ENCODE measurements at regions of chr16 and their contacts with region 1.

Region 1: DNA sequence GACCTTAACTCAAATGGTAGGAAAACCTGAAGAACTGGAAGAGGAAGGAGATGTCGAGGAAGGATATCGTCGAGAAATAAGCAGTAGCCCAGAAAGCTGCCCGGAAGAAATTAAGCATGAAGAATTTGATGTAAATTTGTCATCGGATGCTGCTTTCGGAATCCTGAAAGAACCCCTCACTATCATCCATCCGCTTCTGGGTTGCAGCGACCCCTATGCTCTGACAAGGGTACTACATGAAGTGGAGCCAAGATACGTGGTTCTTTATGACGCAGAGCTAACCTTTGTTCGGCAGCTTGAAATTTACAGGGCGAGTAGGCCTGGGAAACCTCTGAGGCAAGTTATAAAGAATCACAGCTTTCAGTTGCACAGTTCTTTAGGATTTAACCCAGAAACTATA is 15.5 kb downstream of the ERCC4 start:
- DNase-seq: no peak
- ATAC-seq: no peak
- H3K4me3 ChIP-seq: no peak overlapping the region
- H3K27ac ChIP-seq: no peak overlapping the region
- H3K4me1 ChIP-seq: peaks cover 0 to 21% (median 9%) of the 10 kb centered on the region in 9 donors
- H3K27me3 ChIP-seq: no peaks in the 10 kb centered on the region
- CTCF ChIP-seq: peak in 8 of 9 donors; percentile 16 to 48 (median 40)

Region 2: DNA sequence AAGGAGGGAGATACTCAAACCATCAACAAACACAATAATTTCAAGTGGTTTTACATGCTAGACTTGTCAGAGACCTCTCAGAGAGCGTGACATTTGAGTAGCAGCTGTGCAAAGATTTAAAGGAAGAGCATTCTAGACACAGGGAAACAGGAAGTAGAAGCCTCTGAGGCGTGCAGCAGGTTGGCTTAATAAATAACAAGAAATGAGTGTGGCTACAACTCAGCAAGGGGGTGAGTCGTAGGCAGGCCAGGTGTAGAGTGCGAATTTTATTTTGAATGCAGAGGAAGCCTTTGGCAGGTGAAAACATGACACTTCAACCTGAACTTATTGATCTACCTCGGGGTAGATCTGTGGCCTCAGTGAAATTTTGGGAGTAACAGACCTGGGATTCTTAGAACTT is 62.5 kb after region 1 on chr16:
- intact Hi-C with region 1: loop called in 3 of 10 experiments (anchors 5 kb)
- DNase-seq: no peak
- ATAC-seq: no peak
- H3K4me3 ChIP-seq: no peak overlapping the region
- H3K27ac ChIP-seq: peak overlapping the region in 6 of 10 donors; percentile 38 to 95 (median 74)
- H3K4me1 ChIP-seq: peaks cover 5 to 79% (median 49%) of the 10 kb centered on the region in 9 donors
- H3K27me3 ChIP-seq: no peaks in the 10 kb centered on the region
- CTCF ChIP-seq: no peak

Region 3: GRCh38 chr16:14003074-14003570 is 67.7 kb after region 1 on chr16:
- intact Hi-C with region 1: loop called in 4 of 10 experiments (anchors 5 kb)
- DNase-seq: peak; percentile 55 to 80
- ATAC-seq: peak; percentile 57 to 86 (median 72)
- H3K4me3 ChIP-seq: peak overlapping the region in 8 of 10 donors; percentile 17 to 48 (median 42)
- H3K27ac ChIP-seq: peak overlapping the region in 9 of 10 donors; percentile 62 to 84 (median 75)
- H3K4me1 ChIP-seq: peaks cover 8 to 73% (median 61%) of the 10 kb centered on the region in 9 donors
- H3K27me3 ChIP-seq: no peaks in the 10 kb centered on the region
- CTCF ChIP-seq: peak in 4 of 9 donors; percentile 21 to 39 (median 31)

Region 4: GRCh38 chr16:14070877-14071575 is 135.6 kb after region 1 on chr16 and contains the start of gene MRTFB:
- intact Hi-C with region 1: loop called in 3 of 10 experiments (anchors 5 to 10 kb)
- DNase-seq: peak; percentile 77 to 87
- ATAC-seq: peak; percentile 80 to 95 (median 92)
- H3K4me3 ChIP-seq: peak within 1 kb of the TSS; percentile 73 to 99 (median 92)
- H3K27ac ChIP-seq: peak within 1 kb of the TSS; percentile 53 to 94 (median 86)
- H3K4me1 ChIP-seq: peaks cover 0 to 37% (median 19%) of the 10 kb centered on the region in 9 donors
- H3K27me3 ChIP-seq: no peaks in the 10 kb centered on the region
- CTCF ChIP-seq: no peak
- total RNA-seq, gene MRTFB: 20.9 to 41.8 (median 33.0) TPM

Region 5: GRCh38 chr16:14219983-14220382 is 284.6 kb after region 1 on chr16:
- intact Hi-C with region 1: loop called in 1 of 10 experiments (anchors 10 kb)
- DNase-seq: no peak
- ATAC-seq: no peak
- H3K4me3 ChIP-seq: no peak overlapping the region
- H3K27ac ChIP-seq: no peak overlapping the region
- H3K4me1 ChIP-seq: no peaks in the 10 kb centered on the region
- H3K27me3 ChIP-seq: no peaks in the 10 kb centered on the region
- CTCF ChIP-seq: no peak

Region 6: DNA sequence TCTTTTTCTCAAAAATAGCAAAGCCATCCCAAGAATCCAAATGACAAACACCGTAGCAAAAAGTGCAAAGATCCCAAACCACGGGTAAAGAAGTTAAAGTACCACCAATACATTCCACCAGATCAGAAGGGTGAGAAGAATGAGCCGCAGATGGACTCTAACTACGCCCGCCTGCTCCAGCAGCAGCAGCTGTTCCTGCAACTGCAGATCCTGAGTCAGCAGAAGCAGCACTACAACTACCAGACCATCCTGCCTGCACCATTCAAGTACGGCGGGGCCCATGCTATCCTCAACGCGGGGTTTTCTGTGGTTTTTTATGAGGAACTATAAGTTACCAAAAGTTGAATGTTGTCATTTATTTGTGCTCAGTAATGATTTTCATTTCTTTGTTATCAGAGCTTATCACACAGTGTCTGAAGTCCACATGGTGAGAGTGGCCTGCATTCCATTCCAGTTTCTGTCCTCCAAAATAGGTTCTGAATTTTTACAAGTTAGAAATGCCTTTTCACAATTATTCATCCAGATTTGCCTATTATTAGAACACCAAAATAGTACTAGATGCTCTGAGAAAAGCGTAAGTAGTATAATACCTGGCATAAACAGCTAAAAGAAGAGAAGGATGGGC is 304.9 kb after region 1 on chr16:
- intact Hi-C with region 1: loop called in 1 of 10 experiments (anchors 5 kb)
- DNase-seq: no peak
- ATAC-seq: peak in 6 of 8 donors; percentile 61 to 78 (median 67)
- H3K4me3 ChIP-seq: no peak overlapping the region
- H3K27ac ChIP-seq: peak overlapping the region in 7 of 10 donors; percentile 2 to 67 (median 50)
- H3K4me1 ChIP-seq: peaks cover 0 to 30% (median 24%) of the 10 kb centered on the region in 9 donors
- H3K27me3 ChIP-seq: no peaks in the 10 kb centered on the region
- CTCF ChIP-seq: no peak